Transverse colon (tissue), 4 donors: ENCODE measurements at regions of chr6 and their contacts with region 1.

Region 1: DNA sequence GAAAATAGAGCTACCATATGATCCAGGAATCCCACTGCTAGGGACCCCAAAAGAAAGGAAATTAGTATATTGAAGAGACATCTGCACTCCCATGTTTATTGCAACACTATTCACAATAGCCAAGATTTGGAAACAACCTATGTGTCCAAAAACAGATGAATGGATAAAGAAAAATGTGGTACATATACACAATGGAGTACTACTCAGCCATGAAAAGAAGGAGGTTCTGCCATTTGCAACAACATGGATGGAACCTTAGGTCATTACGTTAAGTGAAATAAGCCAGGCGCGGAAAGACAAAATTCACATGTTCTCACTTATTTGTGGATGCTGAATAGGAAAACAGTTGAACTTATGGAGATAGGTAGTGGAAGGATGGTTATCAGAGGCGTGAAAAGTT is 137.3 kb downstream of the ADAT2 start:
- DNase-seq: no peak
- H3K4me3 ChIP-seq: no peak overlapping the region
- H3K27ac ChIP-seq: no peak overlapping the region
- H3K4me1 ChIP-seq: no peaks in the 10 kb centered on the region
- H3K27me3 ChIP-seq: no peaks in the 10 kb centered on the region
- CTCF ChIP-seq: no peak
- EP300 ChIP-seq: no peak
- POLR2A ChIP-seq: no peak

Region 2: DNA sequence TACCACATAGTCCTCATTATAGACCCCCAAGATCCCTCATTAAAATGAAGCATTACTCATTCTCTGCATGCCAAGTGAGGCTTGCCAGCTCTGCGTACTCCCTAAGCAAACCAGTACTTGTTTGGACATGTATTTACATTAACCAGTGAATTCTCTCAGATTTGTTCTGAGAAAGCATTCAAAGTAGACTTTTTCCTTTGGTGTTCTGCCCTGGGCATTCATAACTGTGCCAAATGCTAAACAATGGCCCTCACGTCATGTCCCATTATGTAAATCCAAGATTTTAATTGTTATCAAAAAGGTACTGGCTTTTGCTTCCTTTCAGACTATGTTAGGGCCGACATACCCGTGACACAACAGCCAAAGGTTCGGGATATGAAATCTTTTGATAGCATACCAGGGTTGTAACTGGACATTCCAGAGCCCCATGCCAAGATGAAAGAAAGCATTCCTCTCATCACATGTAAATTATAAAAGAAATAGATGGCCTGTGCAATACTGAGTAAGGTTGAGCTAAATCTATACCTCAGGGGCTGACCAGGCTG is 26.8 kb before region 1 on chr6:
- in situ Hi-C with region 1: no loop called
- intact Hi-C with region 1: loop called (anchors 1 kb)
- DNase-seq: no peak
- H3K4me3 ChIP-seq: no peak overlapping the region
- H3K27ac ChIP-seq: peak overlapping the region in 2 of 4 donors; percentile 34
- H3K4me1 ChIP-seq: no peaks in the 10 kb centered on the region
- H3K27me3 ChIP-seq: no peaks in the 10 kb centered on the region
- CTCF ChIP-seq: no peak
- EP300 ChIP-seq: no peak
- POLR2A ChIP-seq: no peak